Activated CD4-positive, alpha-beta T cell treated with anti-CD3 and anti-CD28 coated beads, Interleukin-2, amount 10 ng/mL, durations not matched to agents 7 days and 5 days (primary cell): ENCODE measurements at regions of chr1 and their contacts with region 1.

Region 1: DNA sequence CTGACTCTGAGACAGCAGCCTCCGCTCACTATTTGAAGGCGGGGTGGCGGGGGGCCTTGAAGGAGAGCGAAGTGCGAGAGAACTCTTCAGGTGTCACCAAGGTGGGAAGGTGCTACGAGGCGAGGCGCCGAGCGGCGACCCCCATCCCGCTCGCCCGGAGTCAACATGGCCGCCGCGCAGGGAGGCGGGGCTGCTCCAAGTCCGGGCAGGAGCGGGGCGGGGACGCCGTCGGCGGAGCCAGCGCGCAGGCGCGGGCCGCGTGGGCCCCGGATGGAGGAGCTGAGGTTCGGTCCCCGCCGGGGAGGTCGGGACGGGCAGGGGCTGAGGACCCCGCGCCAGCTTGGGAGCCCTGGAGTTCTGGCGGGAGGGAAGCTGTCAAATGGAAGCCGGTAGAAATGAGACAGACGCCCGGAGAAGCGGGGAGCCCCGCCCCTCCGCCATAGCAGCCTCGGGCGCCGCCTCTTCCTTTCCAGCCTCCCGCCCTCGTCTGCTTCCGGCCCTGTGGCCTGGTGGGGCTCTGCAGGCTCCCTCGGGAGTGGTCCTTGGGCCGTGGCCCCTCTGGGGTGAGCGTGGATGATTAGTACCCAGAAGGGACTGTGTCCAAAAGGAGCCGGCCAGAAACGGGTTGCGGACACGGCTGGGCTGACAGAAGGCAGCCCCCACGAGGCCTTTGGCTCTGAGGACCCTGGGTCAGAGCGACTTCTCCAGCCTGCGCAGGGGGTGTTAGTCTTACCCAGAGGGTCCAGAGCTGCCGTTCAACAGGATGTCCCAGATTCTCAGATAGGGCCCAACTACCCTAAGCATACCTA is at the start of gene PIGV:
- DNase-seq: peak; percentile 86
- H3K4me3 Mint-ChIP-seq: peak within 1 kb of the TSS; percentile 86
- H3K27ac Mint-ChIP-seq: peak within 1 kb of the TSS; percentile 99
- H3K4me1 Mint-ChIP-seq: peaks cover 69% of the 10 kb centered on the region
- H3K27me3 Mint-ChIP-seq: no peaks in the 10 kb centered on the region
- total RNA-seq, gene PIGV: 16.4 to 16.9 TPM

Region 2: DNA sequence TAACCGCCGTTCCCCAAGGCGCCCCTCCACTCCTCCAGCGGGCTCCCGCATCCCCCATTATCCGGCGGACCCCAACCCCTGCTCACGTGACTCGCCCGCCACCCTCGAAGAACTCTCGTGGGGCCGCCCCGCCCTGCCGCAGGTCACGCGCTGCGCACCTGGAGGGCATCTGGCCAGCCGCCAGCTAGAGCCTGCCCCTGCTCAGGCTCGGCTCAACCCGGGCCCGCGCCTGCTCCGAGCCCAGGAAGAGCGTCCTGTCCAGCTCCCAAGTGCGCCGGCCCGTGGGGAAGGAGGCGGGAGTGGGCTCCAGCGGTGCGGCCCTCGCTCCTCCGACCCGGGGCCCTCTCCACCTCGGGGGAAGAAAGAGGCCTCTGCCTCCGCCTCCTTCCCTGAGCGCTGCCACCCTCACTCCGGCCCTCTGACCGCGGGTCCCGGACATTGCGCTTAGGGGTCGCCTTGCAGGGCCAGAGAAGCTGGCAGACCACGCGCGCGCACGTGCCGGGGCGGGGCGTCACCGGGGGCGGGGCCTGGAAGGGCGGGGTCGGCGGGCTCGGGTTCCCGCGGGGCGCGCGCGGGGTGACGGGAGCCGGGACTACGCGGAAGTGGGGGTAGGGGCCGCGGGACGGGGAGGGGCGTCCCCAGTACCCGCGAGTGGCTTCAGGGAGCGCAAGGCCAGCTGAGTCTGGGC is 287.3 kb before region 1 on chr1:
- CTCF ChIA-PET with region 1: interaction called, 16 read pairs
- POLR2A ChIA-PET with region 1: no interaction called
- DNase-seq: peak; percentile 90
- H3K4me3 Mint-ChIP-seq: peak overlapping the region; percentile 85
- H3K27ac Mint-ChIP-seq: peak overlapping the region; percentile 97
- H3K4me1 Mint-ChIP-seq: peaks cover 30% of the 10 kb centered on the region
- H3K27me3 Mint-ChIP-seq: no peaks in the 10 kb centered on the region

Region 3: DNA sequence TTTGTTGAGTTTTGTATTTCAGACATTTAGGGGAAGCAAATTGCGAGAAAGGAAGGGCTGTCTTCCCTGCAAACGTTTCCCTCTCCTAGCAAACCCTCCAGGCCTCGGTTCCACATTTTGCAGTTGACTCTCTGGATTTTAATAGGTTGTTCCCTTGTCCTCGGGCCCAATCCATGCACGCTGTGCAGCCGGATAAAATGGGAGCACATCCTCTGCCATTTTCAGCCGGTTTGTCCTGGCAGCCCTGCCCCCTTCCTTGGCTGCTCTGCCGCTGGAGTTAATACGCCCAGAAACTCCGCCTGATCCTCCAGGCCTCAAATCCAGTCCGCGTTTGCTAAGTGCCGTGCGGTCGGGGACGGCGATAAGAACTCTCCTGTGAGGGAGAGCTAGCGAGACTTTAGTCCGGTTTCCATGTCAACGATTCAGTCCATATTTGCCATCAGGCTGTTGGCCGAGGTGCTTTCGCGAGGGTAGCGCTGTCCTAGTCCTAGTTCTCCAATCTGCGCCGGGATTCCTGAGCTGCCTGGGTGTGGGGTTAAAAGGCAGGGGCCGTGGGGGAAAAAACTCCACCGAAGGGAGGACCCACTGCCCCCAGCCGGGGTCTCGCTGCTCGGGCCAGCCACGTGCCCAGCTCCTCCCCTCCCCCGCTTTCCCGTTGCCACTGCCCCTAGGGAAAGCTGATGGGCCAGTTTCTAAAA is 95.0 kb before region 1 on chr1:
- CTCF ChIA-PET with region 1: interaction called, 34 read pairs
- POLR2A ChIA-PET with region 1: interaction called, 11 read pairs
- DNase-seq: peak; percentile 93
- H3K4me3 Mint-ChIP-seq: peak overlapping the region; percentile 83
- H3K27ac Mint-ChIP-seq: peak overlapping the region; percentile 96
- H3K4me1 Mint-ChIP-seq: peaks cover 32% of the 10 kb centered on the region
- H3K27me3 Mint-ChIP-seq: no peaks in the 10 kb centered on the region

Region 4: GRCh38 chr1:26744075-26744959 is 43.6 kb before region 1 on chr1:
- CTCF ChIA-PET with region 1: interaction called, 26 read pairs
- POLR2A ChIA-PET with region 1: interaction called, 3 read pairs
- DNase-seq: peak; percentile 94
- H3K4me3 Mint-ChIP-seq: peak overlapping the region; percentile 65
- H3K27ac Mint-ChIP-seq: peak overlapping the region; percentile 92
- H3K4me1 Mint-ChIP-seq: peaks cover 84% of the 10 kb centered on the region
- H3K27me3 Mint-ChIP-seq: no peaks in the 10 kb centered on the region

Region 5: GRCh38 chr1:26799479-26800142 is 11.7 kb after region 1 on chr1:
- CTCF ChIA-PET with region 1: interaction called, 39 read pairs
- POLR2A ChIA-PET with region 1: no interaction called
- DNase-seq: no peak
- H3K4me3 Mint-ChIP-seq: peak overlapping the region; percentile 55
- H3K27ac Mint-ChIP-seq: peak overlapping the region; percentile 92
- H3K4me1 Mint-ChIP-seq: peaks cover 51% of the 10 kb centered on the region
- H3K27me3 Mint-ChIP-seq: no peaks in the 10 kb centered on the region

Region 6: DNA sequence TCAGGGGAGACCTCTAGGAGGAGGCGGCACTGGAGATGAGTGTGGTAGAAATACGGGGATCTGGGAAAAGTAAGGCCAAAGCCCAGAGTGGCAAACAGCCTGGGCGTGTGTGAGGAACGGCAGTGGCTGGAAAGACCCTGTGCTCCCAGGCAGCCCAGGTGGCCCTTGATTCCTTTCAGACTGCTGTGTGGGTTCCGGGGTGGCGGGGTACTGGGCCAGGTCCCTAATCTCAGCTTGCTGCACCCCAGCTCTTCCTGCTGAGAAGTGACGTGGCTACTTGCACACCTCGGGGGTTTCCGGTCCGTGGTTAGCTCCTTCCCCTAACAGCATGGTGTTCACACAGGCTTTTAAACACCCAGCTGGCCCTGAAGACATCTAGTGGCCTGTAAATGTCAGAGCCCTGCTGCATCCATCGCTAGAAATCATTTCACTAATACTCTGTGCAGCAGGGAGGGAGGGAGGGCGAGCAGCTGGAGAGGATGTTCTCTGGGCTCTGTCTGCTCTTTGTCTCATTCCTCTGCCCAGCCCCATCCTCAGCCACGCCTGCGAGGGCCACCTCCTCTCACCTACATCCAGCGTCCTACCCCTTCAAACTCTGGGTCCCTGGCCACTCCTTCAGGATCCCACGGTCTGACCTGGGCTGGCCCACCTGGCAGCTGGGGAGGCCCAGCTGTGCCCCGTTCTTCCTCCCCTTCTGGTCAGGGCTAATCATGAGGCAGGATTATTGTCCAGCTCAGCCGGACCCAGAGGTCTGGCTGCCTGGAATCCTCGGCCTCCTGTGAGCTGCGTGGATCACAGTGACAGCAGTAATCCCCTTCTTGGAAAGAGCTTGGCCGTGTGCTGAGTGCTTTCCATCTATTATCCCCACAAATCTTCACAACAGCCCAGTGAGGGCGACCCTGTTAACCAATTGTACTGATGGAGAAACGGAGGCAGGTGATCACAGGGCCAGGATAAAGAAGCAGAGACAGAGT is 45.8 kb after region 1 on chr1:
- CTCF ChIA-PET with region 1: interaction called, 23 read pairs
- POLR2A ChIA-PET with region 1: no interaction called
- DNase-seq: peak; percentile 95
- H3K4me3 Mint-ChIP-seq: peak overlapping the region; percentile 64
- H3K27ac Mint-ChIP-seq: peak overlapping the region; percentile 99
- H3K4me1 Mint-ChIP-seq: peaks cover 75% of the 10 kb centered on the region
- H3K27me3 Mint-ChIP-seq: no peaks in the 10 kb centered on the region

Region 7: DNA sequence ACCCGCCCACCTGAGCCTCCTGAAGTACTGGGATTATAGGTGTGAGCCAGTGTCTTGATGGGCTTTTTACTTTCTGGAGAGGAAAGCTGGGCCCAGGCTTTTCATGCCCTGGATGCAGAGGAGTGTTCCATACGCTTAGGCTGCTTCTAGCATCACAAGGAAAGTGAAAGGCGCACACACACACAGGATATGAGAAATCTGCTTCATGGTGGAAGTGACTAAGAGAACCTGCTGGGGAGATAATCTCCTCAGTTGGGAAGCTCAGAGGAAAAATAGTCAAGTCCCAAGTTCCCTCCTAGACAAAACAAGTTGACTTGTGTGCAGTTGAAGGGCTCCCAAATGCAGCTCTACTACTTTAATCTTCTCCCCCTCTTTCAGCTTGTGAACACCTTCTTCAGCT is 135.8 kb after region 1 on chr1:
- CTCF ChIA-PET with region 1: no interaction called
- POLR2A ChIA-PET with region 1: no interaction called
- DNase-seq: no peak
- H3K4me3 Mint-ChIP-seq: peak overlapping the region; percentile 93
- H3K27ac Mint-ChIP-seq: no peak overlapping the region
- H3K4me1 Mint-ChIP-seq: peaks cover 41% of the 10 kb centered on the region
- H3K27me3 Mint-ChIP-seq: no peaks in the 10 kb centered on the region

Region 8: DNA sequence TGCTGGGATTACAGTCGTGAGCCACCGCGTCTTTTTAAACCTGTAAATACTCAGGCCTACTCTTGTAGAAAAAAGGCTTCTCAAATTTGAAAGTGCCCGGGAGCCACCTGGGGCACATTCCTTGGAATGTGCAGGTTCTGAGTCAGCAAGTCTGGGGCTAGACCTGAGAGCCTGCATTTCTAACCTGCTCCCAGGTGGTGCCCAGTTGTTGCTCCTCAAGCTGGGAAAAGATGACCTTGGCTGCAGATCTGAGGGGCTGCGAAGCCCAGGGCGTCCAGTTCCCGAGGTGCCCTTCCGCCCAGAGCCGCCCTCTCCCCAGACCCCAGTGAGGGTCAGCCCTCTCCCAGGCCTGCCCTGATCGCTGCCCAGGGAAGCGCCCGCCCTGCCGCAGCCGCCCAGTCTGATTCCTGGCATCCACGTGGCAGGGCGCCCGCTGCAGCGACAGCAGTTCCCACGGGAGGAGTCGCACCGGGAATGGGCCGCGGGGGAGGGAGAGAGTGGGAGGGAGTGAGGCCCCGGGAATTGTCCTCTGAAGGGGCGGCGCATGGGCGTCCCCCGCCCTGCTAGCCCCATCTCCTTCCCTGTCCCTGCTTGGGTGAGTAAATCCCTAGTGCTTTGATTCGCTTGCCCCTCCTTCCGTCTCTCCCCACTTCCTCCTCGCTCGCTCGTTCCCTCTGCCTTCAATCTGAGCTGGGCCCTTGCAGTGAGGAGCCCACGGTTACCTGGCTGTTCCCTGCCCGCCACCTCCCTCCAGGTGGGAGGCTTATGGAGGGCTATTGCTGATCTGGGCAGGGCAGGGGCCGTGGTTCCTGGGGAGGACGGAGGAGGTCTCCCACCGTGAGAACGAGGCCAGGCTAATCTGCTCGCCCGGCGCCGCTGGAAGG is 243.6 kb after region 1 on chr1:
- CTCF ChIA-PET with region 1: no interaction called
- POLR2A ChIA-PET with region 1: no interaction called
- DNase-seq: no peak
- H3K4me3 Mint-ChIP-seq: no peak overlapping the region
- H3K27ac Mint-ChIP-seq: no peak overlapping the region
- H3K4me1 Mint-ChIP-seq: peaks cover 2% of the 10 kb centered on the region
- H3K27me3 Mint-ChIP-seq: peaks cover 3% of the 10 kb centered on the region